ENCODE measurements at regions of chr6 and their contacts with region 1.

Region 1: GRCh38 chr6:36027501-36028087 is at the start of gene MAPK14:
- DNase-seq: peak; percentile 97 to 100
- ATAC-seq: peak; percentile 87 to 97 (median 90)
- H3K4me3 ChIP-seq: peak within 1 kb of the TSS; percentile 98
- H3K4me3 Mint-ChIP-seq: peak within 1 kb of the TSS; percentile 97
- H3K27ac ChIP-seq: peak within 1 kb of the TSS; percentile 81
- H3K27ac Mint-ChIP-seq: peak within 1 kb of the TSS; percentile 93 to 94
- H3K4me1 ChIP-seq: peaks cover 17% of the 10 kb centered on the region
- H3K4me1 Mint-ChIP-seq: peaks cover 35 to 36% of the 10 kb centered on the region in 2 donors
- H3K27me3 ChIP-seq: peaks cover 4% of the 10 kb centered on the region
- H3K27me3 Mint-ChIP-seq: peaks cover 13 to 29% of the 10 kb centered on the region in 2 donors
- CTCF ChIP-seq: peak; percentile 81
- total RNA-seq, gene MAPK14: 68.0 to 106 (median 84.5) TPM

Region 2: GRCh38 chr6:36094753-36095496 is 67.3 kb after region 1 on chr6:
- intact Hi-C with region 1: loop called (anchors 1 kb)
- DNase-seq: peak; percentile 80 to 93
- ATAC-seq: peak; percentile 59 to 79 (median 61)
- H3K4me3 ChIP-seq: no peak overlapping the region
- H3K4me3 Mint-ChIP-seq: no peak overlapping the region
- H3K27ac ChIP-seq: no peak overlapping the region
- H3K27ac Mint-ChIP-seq: peak overlapping the region; percentile 80 to 96
- H3K4me1 ChIP-seq: peaks cover 20% of the 10 kb centered on the region
- H3K4me1 Mint-ChIP-seq: peaks cover 43 to 45% of the 10 kb centered on the region in 2 donors
- H3K27me3 ChIP-seq: no peaks in the 10 kb centered on the region
- H3K27me3 Mint-ChIP-seq: no peaks in the 10 kb centered on the region
- CTCF ChIP-seq: peak; percentile 94

Region 3: GRCh38 chr6:36099872-36100483 is 72.4 kb after region 1 on chr6:
- intact Hi-C with region 1: loop called (anchors 1 kb)
- DNase-seq: peak in 1 of 2 donors; percentile 81
- ATAC-seq: peak; percentile 80 to 89 (median 87)
- H3K4me3 ChIP-seq: no peak overlapping the region
- H3K4me3 Mint-ChIP-seq: peak overlapping the region; percentile 84
- H3K27ac ChIP-seq: peak overlapping the region; percentile 78
- H3K27ac Mint-ChIP-seq: peak overlapping the region; percentile 92 to 96
- H3K4me1 ChIP-seq: peaks cover 46% of the 10 kb centered on the region
- H3K4me1 Mint-ChIP-seq: peaks cover 71 to 72% of the 10 kb centered on the region in 2 donors
- H3K27me3 ChIP-seq: no peaks in the 10 kb centered on the region
- H3K27me3 Mint-ChIP-seq: no peaks in the 10 kb centered on the region
- CTCF ChIP-seq: no peak

Region 4: DNA sequence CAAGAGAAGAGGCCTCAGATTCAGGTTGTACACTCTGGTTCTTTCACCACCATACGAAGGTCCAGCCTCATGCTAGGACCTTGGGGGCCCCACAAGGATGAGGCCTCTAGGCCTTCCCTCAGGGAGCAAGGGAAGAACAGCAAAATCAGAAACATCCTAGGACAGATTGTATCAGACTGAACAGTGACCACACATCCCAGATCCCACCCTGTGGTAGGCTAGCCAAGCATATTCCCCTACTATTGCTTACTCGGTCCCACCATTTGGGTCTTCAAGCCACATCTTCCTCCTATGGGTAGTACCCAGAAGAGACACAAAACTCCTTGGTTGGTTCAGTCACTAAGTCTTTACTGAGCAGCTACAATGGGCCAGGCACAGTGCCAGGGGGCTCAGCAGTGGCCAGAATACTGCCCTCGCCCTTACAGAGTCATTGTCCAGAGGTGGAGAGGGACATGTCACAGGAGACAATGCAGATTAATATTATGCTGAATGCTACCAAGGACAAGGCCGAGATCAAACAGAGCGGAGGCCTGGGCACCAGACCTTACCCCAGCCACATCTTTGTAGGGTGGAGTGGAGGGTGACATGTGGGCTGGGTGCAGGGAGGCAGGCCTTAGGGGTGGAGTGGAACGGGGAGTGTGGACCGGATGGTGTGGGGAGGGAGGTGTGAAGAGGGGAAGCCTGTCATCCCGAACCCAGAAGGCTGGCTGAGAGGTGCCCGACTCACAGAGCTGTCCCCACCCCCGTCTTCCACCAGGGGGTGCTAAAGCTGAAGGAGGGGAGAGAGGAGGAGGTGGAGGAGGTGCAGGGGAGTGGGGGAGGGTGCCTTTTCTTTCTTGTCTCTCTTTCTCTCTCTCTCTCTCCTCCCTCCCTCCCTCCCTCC is 95.9 kb after region 1 on chr6:
- intact Hi-C with region 1: loop called (anchors 1 kb)
- DNase-seq: peak; percentile 87 to 96
- ATAC-seq: peak; percentile 72 to 88 (median 87)
- H3K4me3 ChIP-seq: no peak overlapping the region
- H3K4me3 Mint-ChIP-seq: peak overlapping the region; percentile 64
- H3K27ac ChIP-seq: peak overlapping the region; percentile 69
- H3K27ac Mint-ChIP-seq: peak overlapping the region; percentile 100
- H3K4me1 ChIP-seq: peaks cover 88% of the 10 kb centered on the region
- H3K4me1 Mint-ChIP-seq: peaks cover 68 to 96% of the 10 kb centered on the region in 2 donors
- H3K27me3 ChIP-seq: no peaks in the 10 kb centered on the region
- H3K27me3 Mint-ChIP-seq: no peaks in the 10 kb centered on the region
- CTCF ChIP-seq: peak; percentile 64

Region 5: DNA sequence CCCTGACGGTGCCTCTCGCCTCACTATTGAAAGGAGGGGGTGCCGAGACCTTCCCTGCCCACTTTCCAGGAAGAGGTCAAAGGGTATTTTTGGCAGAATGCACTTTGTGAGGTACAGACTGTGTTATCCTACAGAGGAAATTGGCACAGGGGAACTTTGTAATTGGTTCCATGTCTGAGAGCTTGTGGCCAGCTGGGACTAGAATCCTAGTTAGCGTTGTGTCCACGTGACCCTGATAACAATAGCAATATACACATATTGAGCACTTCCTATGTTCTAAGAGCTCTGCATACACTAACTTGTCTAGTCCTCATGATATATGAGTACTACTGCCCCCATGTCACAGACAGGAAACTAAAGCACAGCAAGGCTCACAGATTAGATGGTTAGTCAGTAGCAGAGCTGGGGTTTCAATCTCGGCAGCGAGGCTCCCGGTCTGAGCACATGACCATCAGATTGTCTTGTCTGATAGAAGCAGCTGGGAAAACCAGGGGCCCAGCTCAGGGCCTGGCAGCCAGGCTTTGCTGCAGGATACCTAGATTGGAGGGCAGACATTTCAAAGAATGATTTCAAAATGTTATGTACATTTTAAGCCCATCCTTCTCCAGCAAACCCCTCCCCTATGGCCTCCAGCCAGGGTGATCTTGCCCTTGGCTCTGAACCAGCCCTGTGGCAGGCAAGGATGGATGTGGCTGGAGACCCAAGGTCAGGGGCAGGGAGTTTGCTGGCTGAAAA is 104.1 kb after region 1 on chr6:
- intact Hi-C with region 1: loop called (anchors 1 kb)
- DNase-seq: peak in 1 of 2 donors; percentile 74
- ATAC-seq: peak; percentile 69 to 73 (median 70)
- H3K4me3 ChIP-seq: peak overlapping the region; percentile 61
- H3K4me3 Mint-ChIP-seq: peak overlapping the region; percentile 85
- H3K27ac ChIP-seq: peak overlapping the region; percentile 90
- H3K27ac Mint-ChIP-seq: peak overlapping the region; percentile 85 to 93
- H3K4me1 ChIP-seq: peaks cover 56% of the 10 kb centered on the region
- H3K4me1 Mint-ChIP-seq: peaks cover 36 to 72% of the 10 kb centered on the region in 2 donors
- H3K27me3 ChIP-seq: no peaks in the 10 kb centered on the region
- H3K27me3 Mint-ChIP-seq: no peaks in the 10 kb centered on the region
- CTCF ChIP-seq: no peak

Region 6: GRCh38 chr6:36196880-36197548 is 169.4 kb after region 1 on chr6:
- intact Hi-C with region 1: loop called (anchors 1 kb)
- DNase-seq: peak; percentile 100
- ATAC-seq: peak; percentile 90 to 97 (median 90)
- H3K4me3 ChIP-seq: peak overlapping the region; percentile 50
- H3K4me3 Mint-ChIP-seq: peak overlapping the region; percentile 87
- H3K27ac ChIP-seq: peak overlapping the region; percentile 76
- H3K27ac Mint-ChIP-seq: peak overlapping the region; percentile 79 to 91
- H3K4me1 ChIP-seq: peaks cover 31% of the 10 kb centered on the region
- H3K4me1 Mint-ChIP-seq: peaks cover 36 to 37% of the 10 kb centered on the region in 2 donors
- H3K27me3 ChIP-seq: no peaks in the 10 kb centered on the region
- H3K27me3 Mint-ChIP-seq: no peaks in the 10 kb centered on the region
- CTCF ChIP-seq: no peak

Region 7: GRCh38 chr6:36360241-36361054 is 332.9 kb after region 1 on chr6:
- intact Hi-C with region 1: loop called (anchors 1 kb)
- DNase-seq: peak; percentile 55 to 85
- ATAC-seq: peak; percentile 91 to 97 (median 96)
- H3K4me3 ChIP-seq: no peak overlapping the region
- H3K4me3 Mint-ChIP-seq: no peak overlapping the region
- H3K27ac ChIP-seq: no peak overlapping the region
- H3K27ac Mint-ChIP-seq: no peak overlapping the region
- H3K4me1 ChIP-seq: peaks cover 15% of the 10 kb centered on the region
- H3K4me1 Mint-ChIP-seq: peaks cover 0 to 17% of the 10 kb centered on the region in 2 donors
- H3K27me3 ChIP-seq: no peaks in the 10 kb centered on the region
- H3K27me3 Mint-ChIP-seq: peaks cover 3 to 9% of the 10 kb centered on the region in 2 donors
- CTCF ChIP-seq: peak; percentile 81

Measured in natural killer cell (primary cell).